ENCODE measurements at regions of chr5 and their contacts with region 1.

Region 1: DNA sequence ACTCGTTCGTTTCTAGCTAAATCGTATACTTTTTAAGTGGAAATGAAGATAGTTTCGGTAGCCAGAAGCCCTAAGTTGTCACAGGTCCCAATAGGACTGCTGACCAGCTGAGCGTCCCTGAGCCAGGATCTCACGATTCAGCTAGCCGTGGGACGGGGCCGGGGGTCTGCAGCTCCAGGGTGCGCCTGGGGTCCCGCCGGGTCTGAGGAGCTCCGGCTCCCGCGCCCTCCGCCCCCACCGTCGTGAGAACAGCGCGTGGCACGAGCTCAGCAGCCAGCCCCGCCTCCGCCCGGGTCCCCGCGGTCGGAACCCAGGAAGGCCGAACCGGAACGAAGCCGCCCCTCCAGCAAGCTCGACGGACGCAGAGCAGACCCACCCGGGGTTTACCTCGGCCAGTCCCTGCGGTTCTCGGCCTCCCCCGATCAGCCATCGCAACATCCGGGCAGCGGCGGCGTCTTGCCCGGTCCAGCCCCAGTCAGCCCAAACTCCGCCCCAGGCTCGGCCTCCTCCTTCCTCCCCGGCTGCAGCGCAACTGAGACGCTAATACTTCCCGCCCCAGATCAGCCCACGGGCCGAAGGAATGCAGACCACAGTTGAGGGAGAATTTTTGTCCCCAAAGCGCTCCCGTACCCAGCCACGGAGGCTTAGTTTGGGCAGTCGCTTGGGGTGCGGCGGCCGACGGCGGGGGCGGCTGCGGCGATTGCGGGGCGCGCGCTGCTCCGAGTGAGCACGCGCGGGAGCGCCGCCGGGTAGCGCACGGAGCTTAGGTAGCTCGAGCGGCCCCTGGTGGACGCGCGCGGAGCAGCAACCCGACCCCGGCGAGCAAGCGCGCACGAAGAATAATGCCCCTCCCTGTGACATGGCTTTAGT is at the start of gene WDR41:
- DNase-seq: peak; percentile 74 to 92 (median 85)
- ATAC-seq: peak; percentile 94
- H3K4me3 ChIP-seq: peak within 1 kb of the TSS; percentile 79 to 87
- H3K4me3 Mint-ChIP-seq: peak within 1 kb of the TSS; percentile 87
- H3K27ac ChIP-seq: peak within 1 kb of the TSS; percentile 79 to 85
- H3K27ac Mint-ChIP-seq: peak within 1 kb of the TSS; percentile 91
- H3K4me1 ChIP-seq: peaks cover 5% of the 10 kb centered on the region
- H3K4me1 Mint-ChIP-seq: peaks cover 13% of the 10 kb centered on the region
- H3K27me3 ChIP-seq: no peaks in the 10 kb centered on the region
- H3K27me3 Mint-ChIP-seq: peaks cover 8% of the 10 kb centered on the region
- CTCF ChIP-seq: peak; percentile 86
- total RNA-seq, gene WDR41: 4.7 to 5.3 TPM

Region 2: GRCh38 chr5:76715736-76716455 is 776.1 kb before region 1 on chr5 and contains the start of gene F2R:
- CTCF ChIA-PET with region 1: no interaction called
- POLR2A ChIA-PET with region 1: no interaction called
- intact Hi-C with region 1: loop called in 1 of 2 experiments (anchors 5 kb)
- DNase-seq: peak in 7 of 9 experiments; percentile 45 to 83 (median 66)
- ATAC-seq: peak; percentile 80
- H3K4me3 ChIP-seq: peak within 1 kb of the TSS; percentile 80 to 91
- H3K4me3 Mint-ChIP-seq: peak within 1 kb of the TSS; percentile 85
- H3K27ac ChIP-seq: peak within 1 kb of the TSS; percentile 44 to 50
- H3K27ac Mint-ChIP-seq: peak within 1 kb of the TSS; percentile 76
- H3K4me1 ChIP-seq: peaks cover 18% of the 10 kb centered on the region
- H3K4me1 Mint-ChIP-seq: peaks cover 28% of the 10 kb centered on the region
- H3K27me3 ChIP-seq: peaks cover 0 to 9% of the 10 kb centered on the region in 2 experiments
- H3K27me3 Mint-ChIP-seq: peaks cover 31% of the 10 kb centered on the region
- CTCF ChIP-seq: peak; percentile 55
- total RNA-seq, gene F2R: 10.7 to 12.7 TPM

Region 3: GRCh38 chr5:77030097-77031071 is 461.6 kb before region 1 on chr5 and contains the start of gene AGGF1:
- CTCF ChIA-PET with region 1: interaction called, 5 read pairs
- POLR2A ChIA-PET with region 1: interaction called, 3 read pairs
- intact Hi-C with region 1: loop called in 1 of 2 experiments (anchors 5 kb)
- DNase-seq: peak; percentile 78 to 95 (median 92)
- ATAC-seq: peak; percentile 98
- H3K4me3 ChIP-seq: peak within 1 kb of the TSS; percentile 84 to 94
- H3K4me3 Mint-ChIP-seq: peak within 1 kb of the TSS; percentile 90
- H3K27ac ChIP-seq: peak within 1 kb of the TSS; percentile 69 to 85
- H3K27ac Mint-ChIP-seq: peak within 1 kb of the TSS; percentile 94
- H3K4me1 ChIP-seq: peaks cover 21% of the 10 kb centered on the region
- H3K4me1 Mint-ChIP-seq: peaks cover 43% of the 10 kb centered on the region
- H3K27me3 ChIP-seq: no peaks in the 10 kb centered on the region
- H3K27me3 Mint-ChIP-seq: no peaks in the 10 kb centered on the region
- CTCF ChIP-seq: no peak
- total RNA-seq, gene AGGF1: 14.8 to 14.9 TPM

Region 4: GRCh38 chr5:77143998-77144836 is 347.8 kb before region 1 on chr5:
- CTCF ChIA-PET with region 1: interaction called, 14 read pairs
- POLR2A ChIA-PET with region 1: interaction called, 6 read pairs
- intact Hi-C with region 1: loop called (anchors 1 to 2 kb)
- DNase-seq: peak in 8 of 9 experiments; percentile 27 to 76 (median 62)
- ATAC-seq: peak; percentile 77
- H3K4me3 ChIP-seq: no peak overlapping the region
- H3K4me3 Mint-ChIP-seq: no peak overlapping the region
- H3K27ac ChIP-seq: no peak overlapping the region
- H3K27ac Mint-ChIP-seq: no peak overlapping the region
- H3K4me1 ChIP-seq: no peaks in the 10 kb centered on the region
- H3K4me1 Mint-ChIP-seq: peaks cover 2% of the 10 kb centered on the region
- H3K27me3 ChIP-seq: no peaks in the 10 kb centered on the region
- H3K27me3 Mint-ChIP-seq: no peaks in the 10 kb centered on the region
- CTCF ChIP-seq: peak; percentile 73

Region 5: DNA sequence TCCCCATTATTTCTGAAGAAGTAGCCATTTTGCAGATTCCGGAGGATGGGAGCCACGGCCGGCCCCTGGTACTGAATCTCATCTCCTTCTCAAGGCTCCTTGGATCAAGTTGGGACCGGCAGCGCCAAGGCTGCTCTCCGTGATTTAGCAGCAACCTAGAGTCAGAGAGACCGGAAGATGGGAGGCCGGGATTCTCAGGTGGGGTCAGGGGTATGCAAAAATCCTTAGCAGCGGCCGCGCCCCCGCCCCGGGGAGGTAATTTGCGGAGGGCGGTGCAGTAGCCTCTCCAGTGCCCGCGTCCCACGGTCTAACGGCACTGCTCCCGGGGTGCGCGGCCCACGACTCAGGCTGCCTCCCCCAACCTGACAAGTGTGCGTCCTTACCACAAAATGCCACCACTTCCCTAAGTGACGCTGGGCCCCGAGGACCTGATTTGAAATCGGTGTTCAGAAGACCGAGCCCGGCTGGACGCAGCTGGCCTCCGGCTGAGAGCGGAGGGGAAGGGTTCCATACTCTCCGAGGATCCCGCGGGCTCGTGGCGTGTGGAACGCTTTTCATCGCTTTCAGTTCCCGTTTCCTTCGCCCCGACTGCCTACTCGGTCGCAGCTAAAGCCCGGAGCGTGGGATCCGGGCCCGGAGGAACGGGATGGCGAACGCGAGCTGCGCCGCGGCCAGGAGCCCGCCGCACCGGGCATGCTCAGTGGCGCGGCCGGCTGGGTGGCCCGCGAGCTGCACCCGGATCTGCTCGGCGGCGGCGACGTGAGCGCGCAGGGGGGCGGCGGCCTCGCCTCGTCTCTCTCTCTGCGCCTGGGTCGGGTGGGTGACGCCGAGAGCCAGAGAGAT is 868.0 kb after region 1 on chr5 and contains the start of gene SCAMP1:
- CTCF ChIA-PET with region 1: no interaction called
- POLR2A ChIA-PET with region 1: no interaction called
- intact Hi-C with region 1: loop called in 1 of 2 experiments (anchors 2 kb)
- DNase-seq: peak; percentile 88 to 96 (median 91)
- ATAC-seq: peak; percentile 78
- H3K4me3 ChIP-seq: peak within 1 kb of the TSS; percentile 95
- H3K4me3 Mint-ChIP-seq: peak within 1 kb of the TSS; percentile 86
- H3K27ac ChIP-seq: peak within 1 kb of the TSS; percentile 92 to 97
- H3K27ac Mint-ChIP-seq: peak within 1 kb of the TSS; percentile 96
- H3K4me1 ChIP-seq: peaks cover 27% of the 10 kb centered on the region
- H3K4me1 Mint-ChIP-seq: peaks cover 53% of the 10 kb centered on the region
- H3K27me3 ChIP-seq: no peaks in the 10 kb centered on the region
- H3K27me3 Mint-ChIP-seq: no peaks in the 10 kb centered on the region
- CTCF ChIP-seq: no peak
- total RNA-seq, gene SCAMP1: 19.2 to 20.3 TPM

Region 6: DNA sequence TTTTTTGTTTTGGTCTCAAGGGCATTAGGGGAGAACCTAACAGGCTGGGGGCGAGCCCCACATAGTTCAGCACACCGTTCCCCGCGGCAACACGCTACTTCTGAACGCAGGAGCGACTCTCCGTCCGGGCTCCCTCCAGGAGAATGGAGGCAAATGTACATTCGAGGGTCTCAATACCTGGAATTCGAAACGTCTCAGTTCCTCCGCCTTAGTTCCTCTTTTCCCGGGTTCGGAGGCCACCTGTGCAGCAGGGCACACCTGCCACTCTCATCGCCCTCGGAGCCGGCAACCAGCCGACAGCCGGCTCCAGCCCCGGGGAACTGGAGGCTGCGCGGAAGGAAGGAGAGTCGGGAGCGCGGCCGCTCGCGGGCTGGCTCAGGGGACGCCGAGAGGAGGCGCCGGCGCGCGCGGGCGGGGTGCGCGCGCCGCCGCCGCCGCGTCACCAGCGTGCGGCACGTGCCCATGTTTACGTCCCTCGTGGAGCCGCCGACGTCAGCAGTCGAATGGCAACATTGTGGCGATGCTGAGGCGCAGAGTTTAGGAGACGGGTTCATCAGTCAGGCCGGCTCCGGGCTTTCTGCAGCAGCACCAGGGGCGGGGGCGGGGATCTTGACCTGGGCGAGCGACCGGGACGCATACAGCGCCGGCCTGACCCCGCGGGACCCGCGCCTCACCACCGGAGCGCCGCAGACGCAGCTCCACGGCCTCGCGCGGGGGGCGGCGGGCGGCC is 1743.8 kb after region 1 on chr5 and contains the start of gene JMY:
- CTCF ChIA-PET with region 1: no interaction called
- POLR2A ChIA-PET with region 1: interaction called, 3 read pairs
- intact Hi-C with region 1: loop called in 1 of 2 experiments (anchors 5 kb)
- DNase-seq: peak; percentile 72 to 94 (median 85)
- ATAC-seq: peak; percentile 86
- H3K4me3 ChIP-seq: peak within 1 kb of the TSS; percentile 79 to 81
- H3K4me3 Mint-ChIP-seq: peak within 1 kb of the TSS; percentile 97
- H3K27ac ChIP-seq: peak within 1 kb of the TSS; percentile 91 to 98
- H3K27ac Mint-ChIP-seq: peak within 1 kb of the TSS; percentile 96
- H3K4me1 ChIP-seq: peaks cover 28% of the 10 kb centered on the region
- H3K4me1 Mint-ChIP-seq: peaks cover 34% of the 10 kb centered on the region
- H3K27me3 ChIP-seq: no peaks in the 10 kb centered on the region
- H3K27me3 Mint-ChIP-seq: no peaks in the 10 kb centered on the region
- CTCF ChIP-seq: no peak
- total RNA-seq, gene JMY: 104 TPM

Measured in CD8-positive, alpha-beta T cell (primary cell).